ENCODE measurements at regions of chr2 and their contacts with region 1.

Region 1: GRCh38 chr2:105749583-105750400 is 5.1 kb downstream of the NCK2 start:
- DNase-seq: no peak
- H3K4me3 ChIP-seq: no peak overlapping the region
- H3K27ac ChIP-seq: no peak overlapping the region
- H3K4me1 ChIP-seq: peaks cover 26% of the 10 kb centered on the region
- H3K27me3 ChIP-seq: no peaks in the 10 kb centered on the region
- CTCF ChIP-seq: no peak

Region 2: GRCh38 chr2:105377819-105378218 is 372.0 kb before region 1 on chr2:
- CTCF ChIA-PET with region 1: no interaction called
- dilution Hi-C with region 1: no loop called
- in situ Hi-C with region 1: no loop called
- intact Hi-C with region 1: no loop called
- DNase-seq: no peak
- H3K4me3 ChIP-seq: no peak overlapping the region
- H3K27ac ChIP-seq: no peak overlapping the region
- H3K4me1 ChIP-seq: peaks cover 88% of the 10 kb centered on the region
- H3K27me3 ChIP-seq: no peaks in the 10 kb centered on the region
- CTCF ChIP-seq: no peak

Region 3: DNA sequence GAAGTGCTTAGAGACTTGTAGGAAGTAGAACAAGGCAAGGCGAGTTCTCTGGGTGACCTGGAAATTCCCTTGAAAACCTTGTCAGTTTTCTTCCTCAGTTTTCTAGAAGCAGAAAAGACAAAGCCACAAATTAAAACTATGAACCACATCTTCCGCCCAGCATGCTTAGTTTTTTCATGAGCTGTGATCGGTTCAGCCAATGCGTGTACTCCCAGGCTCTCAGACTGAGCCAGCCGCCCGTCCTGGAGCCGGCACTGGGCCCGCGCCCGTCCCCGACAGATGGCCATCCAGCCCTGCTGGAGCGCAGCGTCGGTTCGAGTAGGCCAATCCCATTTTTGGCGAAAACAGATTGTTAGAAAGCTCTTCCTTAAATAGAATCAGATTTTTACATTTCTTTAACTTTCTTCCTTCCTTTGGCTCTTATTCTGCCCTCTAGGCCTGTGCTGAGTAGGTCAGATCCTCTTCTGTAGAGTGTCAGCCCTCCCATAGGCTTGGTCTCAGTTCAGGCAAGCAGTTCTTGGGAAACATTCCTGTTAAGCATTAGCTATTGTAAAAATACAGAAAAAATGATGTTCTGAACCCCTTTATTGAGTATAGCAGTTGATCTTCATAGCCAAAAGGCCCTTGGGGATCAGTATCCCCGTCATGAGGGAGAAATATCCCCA is 107.4 kb after region 1 on chr2:
- CTCF ChIA-PET with region 1: no interaction called
- dilution Hi-C with region 1: no loop called
- in situ Hi-C with region 1: no loop called
- intact Hi-C with region 1: loop called (anchors 2 kb)
- DNase-seq: peak; percentile 64
- H3K4me3 ChIP-seq: no peak overlapping the region
- H3K27ac ChIP-seq: peak overlapping the region; percentile 83
- H3K4me1 ChIP-seq: peaks cover 42% of the 10 kb centered on the region
- H3K27me3 ChIP-seq: no peaks in the 10 kb centered on the region
- CTCF ChIP-seq: no peak

Region 4: GRCh38 chr2:105969555-105969954 is 219.8 kb after region 1 on chr2:
- CTCF ChIA-PET with region 1: no interaction called
- dilution Hi-C with region 1: no loop called
- in situ Hi-C with region 1: no loop called
- intact Hi-C with region 1: loop called (anchors 1 kb)
- DNase-seq: peak; percentile 20
- H3K4me3 ChIP-seq: no peak overlapping the region
- H3K27ac ChIP-seq: no peak overlapping the region
- H3K4me1 ChIP-seq: no peaks in the 10 kb centered on the region
- H3K27me3 ChIP-seq: no peaks in the 10 kb centered on the region
- CTCF ChIP-seq: peak; percentile 44 to 50

Region 5: DNA sequence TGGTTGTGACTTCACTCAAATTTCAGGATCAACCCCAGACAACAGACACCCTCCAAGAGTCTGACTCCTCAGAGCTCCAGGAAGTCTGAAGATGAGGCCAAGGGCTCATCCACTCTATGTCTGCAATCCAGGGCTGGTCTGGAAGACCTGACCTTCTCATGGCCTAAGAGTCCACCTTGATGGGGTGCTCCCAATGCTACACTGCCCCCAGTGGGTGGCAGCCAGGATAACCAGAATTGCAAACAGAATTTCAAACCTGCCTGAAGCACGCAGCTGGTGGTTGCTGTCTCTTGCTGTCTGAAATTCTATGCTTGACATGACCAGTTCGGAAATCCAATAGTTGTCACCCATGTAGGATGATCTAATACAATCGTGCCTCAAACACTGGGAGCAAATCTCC is 348.3 kb after region 1 on chr2:
- CTCF ChIA-PET with region 1: no interaction called
- dilution Hi-C with region 1: no loop called
- in situ Hi-C with region 1: no loop called
- intact Hi-C with region 1: loop called (anchors 1 kb)
- DNase-seq: no peak
- H3K4me3 ChIP-seq: no peak overlapping the region
- H3K27ac ChIP-seq: no peak overlapping the region
- H3K4me1 ChIP-seq: no peaks in the 10 kb centered on the region
- H3K27me3 ChIP-seq: no peaks in the 10 kb centered on the region
- CTCF ChIP-seq: peak; percentile 20 to 44